ENCODE measurements at regions of chr14 and their contacts with region 1.

Region 1: GRCh38 chr14:20682435-20683124 is 1.8 kb upstream of the RNASE4 start:
- DNase-seq: peak; percentile 94 to 95
- H3K4me3 ChIP-seq: peak overlapping the region; percentile 76 to 81
- H3K27ac ChIP-seq: peak overlapping the region; percentile 99
- H3K4me1 ChIP-seq: peaks cover 0 to 37% (median 21%) of the 10 kb centered on the region in 4 donors
- H3K27me3 ChIP-seq: no peaks in the 10 kb centered on the region
- CTCF ChIP-seq: peak in 1 of 2 experiments; percentile 15

Region 2: DNA sequence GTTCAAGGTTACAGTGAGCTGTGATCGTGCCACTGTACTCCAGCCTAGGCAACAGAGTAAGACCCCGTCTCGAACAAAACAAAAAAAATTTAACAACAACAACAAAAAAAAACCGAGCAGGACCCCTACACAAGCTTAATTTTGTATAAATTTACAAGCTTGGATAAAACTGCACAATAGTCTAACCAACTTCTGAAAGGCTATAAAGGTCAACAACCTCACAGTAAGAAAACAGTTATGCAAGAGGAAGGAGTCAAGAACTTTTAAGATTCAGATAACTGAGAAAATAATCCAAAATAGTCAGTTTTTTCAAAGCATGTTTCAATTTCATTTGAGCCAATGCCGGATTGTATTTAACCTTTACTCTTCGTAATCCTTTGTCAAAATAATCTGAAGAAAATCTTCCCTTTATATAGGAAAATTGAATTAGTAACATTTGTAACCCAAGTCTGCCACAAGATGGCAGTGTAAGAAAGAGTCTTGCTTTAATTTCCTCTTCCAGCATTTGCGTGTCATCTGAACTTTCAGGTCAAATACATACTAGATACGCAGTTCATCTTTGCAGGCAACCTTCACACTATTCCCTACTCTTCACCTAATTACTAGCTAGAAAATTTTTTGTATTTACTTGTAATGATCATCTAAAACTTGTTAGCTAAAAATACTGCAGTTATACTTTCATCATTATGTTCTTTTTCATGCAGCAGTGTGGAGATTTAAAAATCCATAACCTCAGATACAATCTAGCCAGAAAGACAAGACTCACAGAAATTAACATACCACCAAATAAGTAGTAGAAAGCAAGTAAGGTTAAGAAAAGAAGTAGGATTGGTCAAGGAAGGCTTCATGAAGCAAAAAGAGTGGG is 355.3 kb before region 1 on chr14:
- intact Hi-C with region 1: loop called (anchors 10 kb)
- DNase-seq: no peak
- H3K4me3 ChIP-seq: no peak overlapping the region
- H3K27ac ChIP-seq: peak overlapping the region in 1 of 2 donors; percentile 33
- H3K4me1 ChIP-seq: peaks cover 0 to 48% (median 10%) of the 10 kb centered on the region in 4 donors
- H3K27me3 ChIP-seq: no peaks in the 10 kb centered on the region
- CTCF ChIP-seq: peak; percentile 60 to 62

Region 3: DNA sequence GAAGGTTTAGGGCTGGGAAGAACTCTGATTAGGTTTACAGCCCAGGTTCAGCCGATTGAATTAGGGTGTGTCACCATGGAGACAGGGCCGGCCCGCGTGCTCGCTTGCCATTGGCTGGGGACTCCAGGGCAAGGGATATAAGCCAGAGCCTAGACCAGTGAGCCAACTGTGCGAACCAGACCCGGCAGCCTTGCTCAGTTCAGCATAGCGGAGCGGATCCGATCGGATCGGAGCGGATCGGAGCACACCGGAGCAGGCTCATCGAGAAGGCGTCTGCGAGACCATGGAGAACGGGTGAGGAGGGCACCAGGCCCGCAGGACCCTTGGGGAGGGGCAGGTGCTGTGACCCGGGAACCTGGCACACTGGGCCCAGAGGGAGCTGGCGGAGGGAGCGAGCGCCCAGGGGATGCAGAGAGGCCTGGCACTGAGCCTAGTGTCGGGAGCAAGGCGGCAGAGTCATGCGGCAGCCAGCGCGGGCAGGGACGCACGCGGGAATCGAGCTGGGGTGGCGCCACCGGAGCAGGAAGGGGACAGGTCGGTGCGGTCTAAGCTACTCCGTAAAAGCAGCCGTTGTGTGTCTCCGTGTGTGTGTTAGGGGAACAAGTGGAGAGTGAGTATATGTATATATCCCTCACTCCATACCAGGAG is 213.2 kb before region 1 on chr14 and contains the start of gene PNP:
- intact Hi-C with region 1: loop called (anchors 5 kb)
- DNase-seq: peak; percentile 88 to 93
- H3K4me3 ChIP-seq: peak within 1 kb of the TSS; percentile 56 to 79
- H3K27ac ChIP-seq: peak within 1 kb of the TSS; percentile 79 to 89
- H3K4me1 ChIP-seq: peaks cover 0 to 18% (median 10%) of the 10 kb centered on the region in 4 donors
- H3K27me3 ChIP-seq: no peaks in the 10 kb centered on the region
- CTCF ChIP-seq: no peak

Region 4: DNA sequence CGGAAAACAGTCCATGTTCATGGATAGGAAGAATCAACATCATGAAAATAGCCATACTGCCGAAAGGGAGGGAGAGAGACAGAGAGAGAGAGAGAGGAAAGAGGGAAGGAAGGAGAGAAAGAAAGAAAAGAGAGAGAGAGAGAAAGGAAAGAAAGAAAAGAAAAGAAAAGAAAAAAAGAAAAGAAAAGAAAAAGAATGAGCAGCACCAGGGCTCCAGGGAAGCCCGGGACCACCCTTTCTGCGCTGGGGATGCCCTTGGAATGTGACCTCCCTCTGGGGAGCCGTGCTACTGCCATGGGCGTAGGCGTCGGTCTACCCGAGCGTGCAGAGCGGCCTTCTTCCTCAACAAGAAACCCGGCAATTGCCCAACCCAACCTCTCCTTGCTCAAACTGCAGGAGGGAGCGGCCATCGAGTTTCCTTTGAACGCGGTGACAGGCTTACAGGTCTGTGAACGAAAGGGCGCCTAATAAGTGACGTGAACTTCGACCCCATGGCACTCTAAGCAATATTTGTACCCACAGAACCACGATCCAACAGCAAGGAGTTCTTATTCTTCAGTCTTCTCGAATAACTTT is 58.0 kb before region 1 on chr14:
- intact Hi-C with region 1: loop called (anchors 5 kb)
- DNase-seq: peak in 1 of 2 donors; percentile 65
- H3K4me3 ChIP-seq: peak overlapping the region; percentile 36 to 41
- H3K27ac ChIP-seq: peak overlapping the region in 1 of 2 donors; percentile 1
- H3K4me1 ChIP-seq: peaks cover 0 to 48% (median 25%) of the 10 kb centered on the region in 4 donors
- H3K27me3 ChIP-seq: peaks cover 0 to 5% of the 10 kb centered on the region in 2 donors
- CTCF ChIP-seq: no peak

Region 5: GRCh38 chr14:21103710-21104447 is 421.3 kb after region 1 on chr14:
- intact Hi-C with region 1: loop called (anchors 5 kb)
- DNase-seq: peak; percentile 98
- H3K4me3 ChIP-seq: peak overlapping the region; percentile 60 to 85
- H3K27ac ChIP-seq: peak overlapping the region; percentile 84 to 98
- H3K4me1 ChIP-seq: peaks cover 0 to 45% (median 38%) of the 10 kb centered on the region in 4 donors
- H3K27me3 ChIP-seq: no peaks in the 10 kb centered on the region
- CTCF ChIP-seq: peak; percentile 77 to 86

Measured in tibial artery (tissue), 4 donors.